ENCODE measurements at regions of chr1 and their contacts with region 1.

Region 1: GRCh38 chr1:42533101-42533863 is 70.2 kb downstream of the CCDC30 start:
- DNase-seq: no peak
- CTCF ChIP-seq: no peak

Region 2: DNA sequence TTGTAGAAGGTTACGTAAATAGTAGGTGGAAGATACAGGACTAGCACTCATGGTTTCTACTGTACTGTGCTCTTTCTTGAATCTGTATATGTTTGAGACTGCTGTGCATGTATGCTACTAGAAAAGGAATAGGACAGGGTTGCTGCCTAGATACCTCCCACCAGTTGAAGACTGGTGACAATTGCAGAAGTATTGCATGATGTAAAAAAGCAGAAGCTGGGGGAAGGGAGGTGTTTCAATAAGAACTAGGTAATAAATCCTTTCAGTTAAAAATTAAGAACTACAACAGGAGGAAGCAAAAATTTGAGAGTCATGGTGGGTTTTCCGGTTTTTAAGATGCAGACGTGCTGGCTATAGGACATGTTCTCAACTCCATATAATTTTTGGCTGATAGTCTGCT is 17.9 kb after region 1 on chr1:
- CTCF ChIA-PET with region 1: interaction called, 10 read pairs
- POLR2A ChIA-PET with region 1: no interaction called
- DNase-seq: no peak
- CTCF ChIP-seq: no peak